ENCODE measurements at regions of chr15 and their contacts with region 1.

Region 1: DNA sequence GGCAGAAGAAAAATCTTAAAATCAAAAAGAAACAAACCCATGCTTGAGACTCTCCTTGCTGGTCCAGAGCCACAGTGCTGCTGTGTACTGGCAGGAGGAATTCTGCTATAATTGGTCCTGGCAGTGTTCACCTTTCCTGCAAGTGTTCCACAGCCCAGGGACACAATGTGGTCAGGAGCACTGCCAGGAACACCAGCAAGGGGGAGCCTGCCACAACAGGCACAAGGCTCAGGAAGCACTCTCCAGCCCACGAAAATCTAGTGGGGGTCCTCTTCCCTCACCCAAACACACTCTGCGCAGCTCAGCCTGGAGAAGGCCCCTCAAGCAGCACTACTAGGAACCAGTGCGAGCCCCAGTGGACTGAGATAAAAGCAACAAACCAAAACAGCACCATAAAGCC is 92.9 kb downstream of the UBE3A start:
- DNase-seq: peak; percentile 57 to 82 (median 66)
- ATAC-seq: peak; percentile 99
- H3K4me3 ChIP-seq: peak overlapping the region in 1 of 12 donors; percentile 22
- H3K27ac ChIP-seq: peak overlapping the region in 10 of 12 donors; percentile 1 to 78 (median 44)
- H3K4me1 ChIP-seq: peaks cover 0 to 16% (median 0%) of the 10 kb centered on the region in 12 donors
- H3K27me3 ChIP-seq: no peaks in the 10 kb centered on the region
- CTCF ChIP-seq: peak in 11 of 12 donors; percentile 13 to 58 (median 42)
- POLR2A ChIP-seq: no peak

Region 2: GRCh38 chr15:25391971-25392721 is 46.2 kb after region 1 on chr15:
- intact Hi-C with region 1: loop called in 1 of 10 experiments (anchors 10 kb)
- DNase-seq: no peak
- ATAC-seq: peak in 3 of 4 donors; percentile 33 to 67 (median 52)
- H3K4me3 ChIP-seq: no peak overlapping the region
- H3K27ac ChIP-seq: peak overlapping the region in 3 of 12 donors; percentile 7 to 28 (median 28)
- H3K4me1 ChIP-seq: peaks cover 0 to 43% (median 14%) of the 10 kb centered on the region in 12 donors
- H3K27me3 ChIP-seq: no peaks in the 10 kb centered on the region
- CTCF ChIP-seq: no peak
- POLR2A ChIP-seq: no peak

Region 3: GRCh38 chr15:25446076-25446475 is 100.1 kb after region 1 on chr15:
- intact Hi-C with region 1: no loop called
- DNase-seq: no peak
- ATAC-seq: no peak
- H3K4me3 ChIP-seq: no peak overlapping the region
- H3K27ac ChIP-seq: no peak overlapping the region
- H3K4me1 ChIP-seq: no peaks in the 10 kb centered on the region
- H3K27me3 ChIP-seq: no peaks in the 10 kb centered on the region
- CTCF ChIP-seq: no peak
- POLR2A ChIP-seq: no peak

Region 4: DNA sequence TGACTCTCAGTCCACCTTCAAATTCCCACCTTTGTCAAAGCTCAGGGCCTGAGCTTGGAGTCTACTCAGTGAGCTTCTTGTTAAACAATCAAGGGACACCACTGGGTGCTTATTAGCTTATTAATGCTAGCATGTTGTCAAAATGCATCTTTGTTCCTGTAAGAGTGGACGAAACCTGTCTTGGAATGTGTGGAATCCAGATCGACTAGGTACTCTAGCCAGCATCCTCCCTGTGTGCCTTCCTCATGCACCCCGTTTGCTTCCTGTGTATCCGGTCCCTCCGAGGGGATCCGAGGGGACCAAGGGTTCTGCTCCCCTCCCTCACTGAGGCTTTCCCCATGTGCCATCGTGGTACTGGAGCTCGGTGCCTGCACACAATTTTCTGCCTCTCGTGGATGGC is 168.6 kb after region 1 on chr15:
- intact Hi-C with region 1: no loop called
- DNase-seq: no peak
- ATAC-seq: no peak
- H3K4me3 ChIP-seq: no peak overlapping the region
- H3K27ac ChIP-seq: no peak overlapping the region
- H3K4me1 ChIP-seq: peaks cover 0 to 3% (median 0%) of the 10 kb centered on the region in 12 donors
- H3K27me3 ChIP-seq: no peaks in the 10 kb centered on the region
- CTCF ChIP-seq: no peak
- POLR2A ChIP-seq: no peak

Measured in heart left ventricle (tissue), 16 donors.